Caco-2 (cell line): ENCODE measurements at regions of chr14 and their contacts with region 1.

Region 1: GRCh38 chr14:79321076-79321475 is 890.2 kb downstream of the DIO2 start:
- DNase-seq: no peak
- H3K4me3 ChIP-seq: no peak overlapping the region
- H3K4me3 Mint-ChIP-seq: no peak overlapping the region
- H3K27ac Mint-ChIP-seq: no peak overlapping the region
- H3K4me1 ChIP-seq: peaks cover 31% of the 10 kb centered on the region
- H3K4me1 Mint-ChIP-seq: peaks cover 19% of the 10 kb centered on the region
- H3K27me3 ChIP-seq: no peaks in the 10 kb centered on the region
- H3K27me3 Mint-ChIP-seq: no peaks in the 10 kb centered on the region
- CTCF ChIP-seq: no peak

Region 2: DNA sequence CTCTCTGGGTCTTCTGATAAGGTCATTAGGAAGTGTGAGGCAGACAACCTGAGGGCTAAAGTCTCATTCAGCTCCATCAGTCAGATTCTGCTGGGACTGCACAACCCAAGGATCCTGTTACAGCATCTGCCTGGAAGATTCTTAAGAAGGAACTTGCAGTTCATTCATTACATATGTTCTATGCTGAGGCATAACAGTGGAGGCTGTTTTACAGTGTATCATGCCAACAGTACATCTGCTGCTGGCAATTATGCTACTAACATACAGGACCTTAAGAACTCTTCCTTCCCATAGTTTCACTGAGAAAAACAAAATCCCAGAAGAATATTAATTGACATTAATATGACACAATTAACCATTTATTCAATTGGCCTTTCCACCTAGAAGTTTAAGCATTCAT is 78.4 kb before region 1 on chr14:
- CTCF ChIA-PET with region 1: no interaction called
- POLR2A ChIA-PET with region 1: no interaction called
- intact Hi-C with region 1: no loop called
- DNase-seq: no peak
- H3K4me3 ChIP-seq: no peak overlapping the region
- H3K4me3 Mint-ChIP-seq: no peak overlapping the region
- H3K27ac Mint-ChIP-seq: no peak overlapping the region
- H3K4me1 ChIP-seq: no peaks in the 10 kb centered on the region
- H3K4me1 Mint-ChIP-seq: no peaks in the 10 kb centered on the region
- H3K27me3 ChIP-seq: no peaks in the 10 kb centered on the region
- H3K27me3 Mint-ChIP-seq: peaks cover 3% of the 10 kb centered on the region
- CTCF ChIP-seq: no peak

Region 3: DNA sequence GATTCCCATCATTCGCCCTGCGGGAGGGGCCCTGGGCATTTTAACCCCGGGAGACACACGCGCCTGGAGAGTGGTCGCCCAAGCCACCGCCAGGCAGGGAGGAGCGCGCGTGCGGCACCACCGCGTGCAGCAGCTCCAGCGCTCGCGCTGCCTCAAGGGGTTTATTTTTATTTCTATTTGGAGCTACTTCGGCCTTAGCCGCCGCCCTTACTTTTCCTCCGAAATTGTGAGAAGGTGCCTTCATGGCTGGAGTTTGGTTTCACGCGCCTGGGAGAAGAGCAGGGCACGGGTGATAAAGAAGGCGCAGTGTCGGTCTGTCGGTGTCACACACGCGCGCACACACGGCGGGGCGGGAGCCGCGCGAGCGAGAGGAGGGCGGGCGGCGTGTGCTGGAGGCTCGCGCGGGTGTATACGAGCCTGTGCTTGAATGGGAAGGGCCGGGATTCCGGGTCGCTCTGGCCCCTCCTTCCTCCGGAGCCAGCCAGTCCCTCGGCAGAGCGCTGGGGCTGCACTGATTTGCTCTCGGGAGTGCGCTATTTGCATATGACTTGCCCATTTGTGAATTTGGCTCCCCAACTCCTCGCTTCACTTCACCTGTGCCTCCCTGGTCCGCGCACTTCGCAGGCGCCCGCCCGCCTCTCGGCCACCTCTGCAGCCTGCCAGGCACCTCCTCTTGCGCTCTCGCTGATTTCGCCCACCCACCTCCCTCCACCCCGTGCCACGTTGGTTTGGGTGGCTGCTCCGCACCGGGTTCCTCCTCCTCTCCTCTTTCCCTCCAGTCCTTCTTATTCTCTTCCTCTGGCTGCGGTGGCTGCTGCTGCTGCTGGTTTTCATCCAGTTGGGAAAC is 42.1 kb before region 1 on chr14:
- CTCF ChIA-PET with region 1: no interaction called
- POLR2A ChIA-PET with region 1: no interaction called
- intact Hi-C with region 1: loop called (anchors 1 kb)
- DNase-seq: peak; percentile 93 to 95
- H3K4me3 ChIP-seq: peak overlapping the region; percentile 75
- H3K4me3 Mint-ChIP-seq: peak overlapping the region; percentile 95
- H3K27ac Mint-ChIP-seq: peak overlapping the region; percentile 78
- H3K4me1 ChIP-seq: peaks cover 11% of the 10 kb centered on the region
- H3K4me1 Mint-ChIP-seq: peaks cover 28% of the 10 kb centered on the region
- H3K27me3 ChIP-seq: no peaks in the 10 kb centered on the region
- H3K27me3 Mint-ChIP-seq: peaks cover 4% of the 10 kb centered on the region
- CTCF ChIP-seq: no peak

Region 4: DNA sequence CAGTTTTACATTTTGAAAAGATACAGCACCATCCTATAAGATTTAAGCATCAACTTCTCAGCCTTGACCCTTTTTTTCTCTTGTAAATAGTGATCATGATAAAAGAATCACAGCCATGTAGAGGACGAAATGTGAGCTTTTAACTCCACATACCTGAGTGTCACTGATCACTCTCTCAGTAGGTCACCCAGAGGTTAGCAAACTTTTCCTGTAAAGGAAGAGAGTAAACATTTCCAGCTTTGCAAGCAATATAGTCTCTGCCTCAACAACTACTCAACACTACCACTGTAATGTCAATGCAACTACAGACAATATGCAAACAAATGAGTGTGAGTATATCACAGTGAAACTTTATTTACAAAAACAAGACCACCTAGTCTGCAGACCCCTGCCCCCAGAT is 21.9 kb before region 1 on chr14:
- CTCF ChIA-PET with region 1: no interaction called
- POLR2A ChIA-PET with region 1: no interaction called
- intact Hi-C with region 1: loop called (anchors 1 kb)
- DNase-seq: peak in 1 of 2 experiments; percentile 50
- H3K4me3 ChIP-seq: no peak overlapping the region
- H3K4me3 Mint-ChIP-seq: no peak overlapping the region
- H3K27ac Mint-ChIP-seq: peak overlapping the region; percentile 78
- H3K4me1 ChIP-seq: peaks cover 47% of the 10 kb centered on the region
- H3K4me1 Mint-ChIP-seq: peaks cover 25% of the 10 kb centered on the region
- H3K27me3 ChIP-seq: no peaks in the 10 kb centered on the region
- H3K27me3 Mint-ChIP-seq: no peaks in the 10 kb centered on the region
- CTCF ChIP-seq: no peak

Region 5: DNA sequence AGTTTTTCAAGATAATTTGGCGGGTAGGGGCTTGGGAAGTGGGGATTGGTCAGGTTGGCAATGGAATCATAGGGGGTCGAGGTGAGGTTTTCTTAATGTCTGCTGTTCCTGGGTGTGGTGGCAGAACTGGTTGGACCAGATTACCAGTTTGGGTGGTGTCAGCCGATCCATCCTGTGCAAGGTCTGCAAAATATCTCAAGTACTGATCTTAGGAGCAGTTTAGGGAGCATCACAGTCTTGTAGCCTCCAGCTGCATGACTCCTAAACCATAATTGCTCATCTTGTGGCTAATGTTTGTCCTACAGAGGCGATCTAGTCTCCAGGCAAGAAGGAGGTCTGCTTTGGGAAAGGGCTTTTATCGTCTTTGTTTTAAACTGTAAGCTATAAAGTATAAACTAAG is 21.9 kb after region 1 on chr14:
- CTCF ChIA-PET with region 1: no interaction called
- POLR2A ChIA-PET with region 1: no interaction called
- intact Hi-C with region 1: loop called (anchors 1 kb)
- DNase-seq: peak; percentile 33 to 43
- H3K4me3 ChIP-seq: no peak overlapping the region
- H3K4me3 Mint-ChIP-seq: peak overlapping the region; percentile 8
- H3K27ac Mint-ChIP-seq: no peak overlapping the region
- H3K4me1 ChIP-seq: peaks cover 49% of the 10 kb centered on the region
- H3K4me1 Mint-ChIP-seq: peaks cover 39% of the 10 kb centered on the region
- H3K27me3 ChIP-seq: no peaks in the 10 kb centered on the region
- H3K27me3 Mint-ChIP-seq: no peaks in the 10 kb centered on the region
- CTCF ChIP-seq: no peak